ENCODE measurements at regions of chr4 and their contacts with region 1.

Region 1: DNA sequence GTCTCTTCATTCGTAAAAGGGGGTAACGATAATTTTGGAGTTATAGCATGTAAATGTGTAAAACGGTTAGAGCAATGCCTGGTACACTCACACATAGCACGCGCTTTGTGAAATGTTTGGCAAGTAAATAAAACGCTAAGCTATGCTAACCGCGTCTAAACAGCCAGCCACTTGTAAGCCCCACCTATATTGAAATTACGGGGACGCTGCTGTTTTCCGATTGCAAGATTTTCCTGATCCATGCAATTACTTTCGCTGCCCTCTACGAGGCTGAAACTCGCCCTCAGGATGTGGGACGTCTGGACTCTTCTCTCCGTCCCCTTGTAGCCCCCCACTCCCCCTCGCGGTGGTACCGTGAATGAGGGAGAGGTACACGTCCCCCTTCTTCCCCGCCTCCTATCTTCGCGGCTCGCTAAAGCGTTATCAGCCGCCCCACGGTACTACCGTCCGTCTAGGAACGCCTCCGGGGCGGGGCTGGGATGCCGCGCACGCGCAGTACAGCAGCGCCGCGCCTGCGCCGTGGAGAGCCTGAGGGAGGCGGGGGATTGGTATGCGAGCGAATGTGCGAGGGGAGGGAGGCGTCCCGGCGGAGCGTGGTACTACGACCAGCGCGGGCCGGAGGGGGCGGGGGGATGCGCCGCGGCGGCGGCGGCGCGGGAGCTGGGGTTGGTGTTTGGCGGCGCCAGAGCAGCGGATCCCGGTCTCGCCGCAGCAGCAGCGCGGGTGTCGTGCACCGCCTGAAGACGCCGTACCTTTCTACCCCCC is at the start of gene STIM2:
- DNase-seq: peak; percentile 95 to 100 (median 99)
- ATAC-seq: peak; percentile 80
- H3K4me3 ChIP-seq: peak within 1 kb of the TSS; percentile 77
- H3K4me3 Mint-ChIP-seq: peak within 1 kb of the TSS; percentile 95 to 100 (median 98)
- H3K27ac ChIP-seq: peak within 1 kb of the TSS; percentile 91
- H3K27ac Mint-ChIP-seq: peak within 1 kb of the TSS; percentile 95 to 99 (median 98)
- H3K4me1 ChIP-seq: peaks cover 46 to 48% of the 10 kb centered on the region in 2 donors
- H3K4me1 Mint-ChIP-seq: peaks cover 47 to 71% (median 66%) of the 10 kb centered on the region in 7 donors
- H3K27me3 ChIP-seq: no peaks in the 10 kb centered on the region
- H3K27me3 Mint-ChIP-seq: peaks cover 0 to 3% (median 0%) of the 10 kb centered on the region in 5 donors
- total RNA-seq, gene STIM2: 61.7 to 103 (median 74.5) TPM

Region 2: GRCh38 chr4:25312496-25313200 is 1547.7 kb before region 1 on chr4 and contains the start of gene ZCCHC4:
- CTCF ChIA-PET with region 1: no interaction called
- POLR2A ChIA-PET with region 1: no interaction called
- intact Hi-C with region 1: loop called in 1 of 2 experiments (anchors 1 kb)
- DNase-seq: peak; percentile 83 to 99 (median 92)
- ATAC-seq: peak; percentile 100
- H3K4me3 ChIP-seq: peak within 1 kb of the TSS; percentile 80
- H3K4me3 Mint-ChIP-seq: peak within 1 kb of the TSS; percentile 91 to 100 (median 98)
- H3K27ac ChIP-seq: peak within 1 kb of the TSS; percentile 71
- H3K27ac Mint-ChIP-seq: peak within 1 kb of the TSS; percentile 90 to 98 (median 95)
- H3K4me1 ChIP-seq: peaks cover 5 to 7% of the 10 kb centered on the region in 2 donors
- H3K4me1 Mint-ChIP-seq: peaks cover 11 to 34% (median 29%) of the 10 kb centered on the region in 7 donors
- H3K27me3 ChIP-seq: no peaks in the 10 kb centered on the region
- H3K27me3 Mint-ChIP-seq: peaks cover 0 to 10% (median 4%) of the 10 kb centered on the region in 5 donors
- total RNA-seq, gene ZCCHC4: 9.5 to 15.5 (median 13.6) TPM

Region 3: DNA sequence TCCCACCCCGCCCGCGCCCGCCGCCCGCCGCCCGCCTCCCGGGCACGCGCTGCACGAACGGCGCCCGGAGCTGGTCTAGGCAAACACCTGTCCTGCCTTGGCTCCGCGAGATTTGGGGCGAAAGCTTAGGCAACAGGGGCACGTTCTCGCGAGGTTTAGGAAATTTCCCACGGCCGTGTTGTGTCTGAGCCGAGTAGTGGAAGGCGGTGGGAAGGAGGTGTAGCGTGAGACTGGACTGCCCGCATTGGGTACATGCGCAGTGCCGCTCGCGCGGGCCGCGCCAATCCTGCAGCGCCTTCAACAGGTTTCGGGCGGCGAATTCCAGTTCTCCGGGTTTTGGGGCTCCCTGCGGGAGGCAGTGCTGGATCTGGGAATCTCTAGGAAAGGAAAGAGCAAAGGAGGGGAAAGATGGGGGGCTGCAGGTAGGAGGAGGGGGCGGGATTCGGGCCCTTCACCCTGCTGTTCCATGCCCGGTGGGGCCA is 540.8 kb before region 1 on chr4:
- CTCF ChIA-PET with region 1: no interaction called
- POLR2A ChIA-PET with region 1: interaction called, 6 read pairs
- intact Hi-C with region 1: loop called (anchors 1 kb)
- DNase-seq: peak; percentile 88 to 96 (median 94)
- ATAC-seq: peak; percentile 77
- H3K4me3 ChIP-seq: peak overlapping the region; percentile 89
- H3K4me3 Mint-ChIP-seq: peak overlapping the region; percentile 89 to 100 (median 96)
- H3K27ac ChIP-seq: peak overlapping the region; percentile 84
- H3K27ac Mint-ChIP-seq: peak overlapping the region; percentile 92 to 100 (median 96)
- H3K4me1 ChIP-seq: peaks cover 10 to 14% of the 10 kb centered on the region in 2 donors
- H3K4me1 Mint-ChIP-seq: peaks cover 34 to 43% (median 36%) of the 10 kb centered on the region in 7 donors
- H3K27me3 ChIP-seq: no peaks in the 10 kb centered on the region
- H3K27me3 Mint-ChIP-seq: no peaks in the 10 kb centered on the region

Region 4: GRCh38 chr4:26484032-26484515 is 376.3 kb before region 1 on chr4:
- CTCF ChIA-PET with region 1: no interaction called
- POLR2A ChIA-PET with region 1: no interaction called
- intact Hi-C with region 1: no loop called
- DNase-seq: no peak
- ATAC-seq: no peak
- H3K4me3 ChIP-seq: no peak overlapping the region
- H3K4me3 Mint-ChIP-seq: no peak overlapping the region
- H3K27ac ChIP-seq: no peak overlapping the region
- H3K27ac Mint-ChIP-seq: no peak overlapping the region
- H3K4me1 ChIP-seq: no peaks in the 10 kb centered on the region
- H3K4me1 Mint-ChIP-seq: no peaks in the 10 kb centered on the region
- H3K27me3 ChIP-seq: no peaks in the 10 kb centered on the region
- H3K27me3 Mint-ChIP-seq: peaks cover 3 to 11% (median 7%) of the 10 kb centered on the region in 5 donors

Region 5: DNA sequence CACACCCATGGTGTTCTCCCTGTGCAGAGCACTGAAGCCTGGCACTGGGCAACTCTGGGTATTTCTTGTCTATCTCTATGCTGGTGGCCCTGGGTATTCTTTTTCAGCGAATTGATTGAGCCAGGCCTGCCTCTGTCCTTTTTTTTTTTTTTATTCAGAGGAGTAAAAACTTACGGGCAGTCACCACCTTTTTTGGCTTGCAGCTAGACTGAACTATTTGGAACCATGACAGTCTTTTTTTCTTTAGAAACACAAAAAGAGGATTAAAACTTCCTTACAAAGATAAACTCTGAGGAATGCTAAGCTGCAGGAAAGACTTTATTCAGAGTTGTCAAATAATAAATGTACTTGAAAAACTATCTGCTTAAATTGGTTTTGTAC is 118.9 kb before region 1 on chr4:
- CTCF ChIA-PET with region 1: no interaction called
- POLR2A ChIA-PET with region 1: no interaction called
- intact Hi-C with region 1: no loop called
- DNase-seq: no peak
- ATAC-seq: no peak
- H3K4me3 ChIP-seq: no peak overlapping the region
- H3K4me3 Mint-ChIP-seq: no peak overlapping the region
- H3K27ac ChIP-seq: no peak overlapping the region
- H3K27ac Mint-ChIP-seq: no peak overlapping the region
- H3K4me1 ChIP-seq: no peaks in the 10 kb centered on the region
- H3K4me1 Mint-ChIP-seq: peaks cover 0 to 3% (median 0%) of the 10 kb centered on the region in 7 donors
- H3K27me3 ChIP-seq: no peaks in the 10 kb centered on the region
- H3K27me3 Mint-ChIP-seq: peaks cover 0 to 12% (median 0%) of the 10 kb centered on the region in 5 donors

Region 6: GRCh38 chr4:26787461-26788340 is 72.6 kb before region 1 on chr4:
- CTCF ChIA-PET with region 1: no interaction called
- POLR2A ChIA-PET with region 1: interaction called, 3 read pairs
- intact Hi-C with region 1: loop called in 1 of 2 experiments (anchors 1 kb)
- DNase-seq: peak in 7 of 9 donors; percentile 5 to 43 (median 24)
- ATAC-seq: peak; percentile 60
- H3K4me3 ChIP-seq: no peak overlapping the region
- H3K4me3 Mint-ChIP-seq: no peak overlapping the region
- H3K27ac ChIP-seq: no peak overlapping the region
- H3K27ac Mint-ChIP-seq: peak overlapping the region in 5 of 9 donors; percentile 5 to 85 (median 33)
- H3K4me1 ChIP-seq: no peaks in the 10 kb centered on the region
- H3K4me1 Mint-ChIP-seq: peaks cover 0 to 14% (median 10%) of the 10 kb centered on the region in 7 donors
- H3K27me3 ChIP-seq: no peaks in the 10 kb centered on the region
- H3K27me3 Mint-ChIP-seq: peaks cover 0 to 4% (median 0%) of the 10 kb centered on the region in 5 donors

Region 7: GRCh38 chr4:26896636-26897035 is 36.3 kb after region 1 on chr4:
- CTCF ChIA-PET with region 1: no interaction called
- POLR2A ChIA-PET with region 1: interaction called, 5 read pairs
- intact Hi-C with region 1: loop called in 1 of 2 experiments (anchors 5 kb)
- DNase-seq: no peak
- ATAC-seq: no peak
- H3K4me3 ChIP-seq: no peak overlapping the region
- H3K4me3 Mint-ChIP-seq: peak overlapping the region in 2 of 10 donors; percentile 1 to 15
- H3K27ac ChIP-seq: no peak overlapping the region
- H3K27ac Mint-ChIP-seq: peak overlapping the region in 3 of 9 donors; percentile 32 to 47 (median 40)
- H3K4me1 ChIP-seq: peaks cover 7 to 23% of the 10 kb centered on the region in 2 donors
- H3K4me1 Mint-ChIP-seq: peaks cover 42 to 87% (median 82%) of the 10 kb centered on the region in 7 donors
- H3K27me3 ChIP-seq: no peaks in the 10 kb centered on the region
- H3K27me3 Mint-ChIP-seq: no peaks in the 10 kb centered on the region

Region 8: GRCh38 chr4:26985873-26986272 is 125.5 kb after region 1 on chr4:
- CTCF ChIA-PET with region 1: interaction called, 4 read pairs
- POLR2A ChIA-PET with region 1: interaction called, 8 read pairs
- intact Hi-C with region 1: loop called in 1 of 2 experiments (anchors 1 kb)
- DNase-seq: peak in 8 of 9 donors; percentile 33 to 71 (median 59)
- ATAC-seq: peak; percentile 95
- H3K4me3 ChIP-seq: peak overlapping the region; percentile 11
- H3K4me3 Mint-ChIP-seq: peak overlapping the region in 9 of 10 donors; percentile 19 to 72 (median 63)
- H3K27ac ChIP-seq: no peak overlapping the region
- H3K27ac Mint-ChIP-seq: peak overlapping the region in 6 of 9 donors; percentile 2 to 39 (median 10)
- H3K4me1 ChIP-seq: peaks cover 8 to 22% of the 10 kb centered on the region in 2 donors
- H3K4me1 Mint-ChIP-seq: peaks cover 19 to 78% (median 72%) of the 10 kb centered on the region in 7 donors
- H3K27me3 ChIP-seq: no peaks in the 10 kb centered on the region
- H3K27me3 Mint-ChIP-seq: no peaks in the 10 kb centered on the region

Measured in naive thymus-derived CD4-positive, alpha-beta T cell (primary cell).